OCI-LY7 (cell line): ENCODE measurements at regions of chr15 and their contacts with region 1.

Region 1: GRCh38 chr15:68820295-68821189 is at the start of gene ANP32A:
- DNase-seq: peak; percentile 98
- H3K4me3 ChIP-seq: peak within 1 kb of the TSS; percentile 95
- H3K27ac ChIP-seq: peak within 1 kb of the TSS; percentile 91
- H3K4me1 ChIP-seq: peaks cover 30% of the 10 kb centered on the region
- CTCF ChIP-seq: no peak
- total RNA-seq, gene ANP32A: 232 and 282 TPM in 2 replicates

Region 2: GRCh38 chr15:68783226-68784058 is 37.1 kb before region 1 on chr15:
- CTCF ChIA-PET with region 1: no interaction called
- POLR2A ChIA-PET with region 1: interaction called, 3 read pairs
- intact Hi-C with region 1: loop called (anchors 5 kb)
- DNase-seq: peak; percentile 66
- H3K4me3 ChIP-seq: no peak overlapping the region
- H3K27ac ChIP-seq: no peak overlapping the region
- H3K4me1 ChIP-seq: no peaks in the 10 kb centered on the region
- CTCF ChIP-seq: peak; percentile 80

Region 3: GRCh38 chr15:68833700-68834331 is 13.3 kb after region 1 on chr15:
- CTCF ChIA-PET with region 1: interaction called, 3 read pairs
- POLR2A ChIA-PET with region 1: interaction called, 14 read pairs
- intact Hi-C with region 1: no loop called
- DNase-seq: peak; percentile 97
- H3K4me3 ChIP-seq: peak overlapping the region; percentile 29
- H3K27ac ChIP-seq: peak overlapping the region; percentile 92
- H3K4me1 ChIP-seq: peaks cover 54% of the 10 kb centered on the region
- CTCF ChIP-seq: no peak

Region 4: GRCh38 chr15:68875377-68876116 is 55.0 kb after region 1 on chr15:
- CTCF ChIA-PET with region 1: interaction called, 3 read pairs
- POLR2A ChIA-PET with region 1: interaction called, 3 read pairs
- intact Hi-C with region 1: loop called (anchors 1 kb)
- DNase-seq: peak; percentile 94
- H3K4me3 ChIP-seq: peak overlapping the region; percentile 22
- H3K27ac ChIP-seq: peak overlapping the region; percentile 29
- H3K4me1 ChIP-seq: peaks cover 38% of the 10 kb centered on the region
- CTCF ChIP-seq: peak; percentile 93